K562 (cell line): ENCODE measurements at regions of chr2 and their contacts with region 1.

Region 1: DNA sequence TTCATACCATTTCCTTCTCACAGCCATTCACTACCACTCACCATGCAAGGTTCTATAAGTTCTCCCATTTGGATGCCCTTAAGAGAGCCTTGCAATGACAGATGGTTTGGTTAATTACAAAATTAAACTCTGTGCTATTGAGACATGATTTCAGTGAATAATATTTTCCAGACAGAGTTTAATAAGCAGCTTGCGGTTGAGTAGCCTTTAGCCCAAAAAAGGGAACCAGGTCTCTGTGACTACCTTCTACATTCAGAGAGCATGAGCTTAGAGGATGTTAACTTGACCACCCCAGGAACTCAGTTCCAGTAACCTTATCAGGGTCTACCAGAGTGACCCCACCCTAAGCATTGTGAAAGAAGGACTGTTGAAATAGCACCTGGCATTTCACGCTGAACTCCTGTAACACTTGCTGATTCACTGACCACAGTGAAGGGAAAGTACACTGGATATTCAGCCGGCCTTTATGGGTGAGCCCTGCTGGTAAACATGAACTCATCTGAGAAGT is 1173.1 kb upstream of the ZEB2 start:
- DNase-seq: peak; percentile 65 to 97 (median 80)
- ATAC-seq: peak; percentile 98
- H3K4me3 ChIP-seq: no peak overlapping the region
- H3K27ac ChIP-seq: peak overlapping the region; percentile 82
- H3K4me1 ChIP-seq: peaks cover 0 to 19% of the 10 kb centered on the region in 2 experiments; a peak in 3 of 5 replicates
- H3K27me3 ChIP-seq: no peaks in the 10 kb centered on the region
- CTCF ChIP-seq: no peak
- EP300 ChIP-seq: peak; percentile 99
- POLR2A ChIP-seq: 0 out of 2 replicates have a peak, but pooled peaks have one; percentile 36
- RAD21 ChIP-seq: peak; percentile 8 to 53; a peak in 3 of 4 replicates

Region 2: DNA sequence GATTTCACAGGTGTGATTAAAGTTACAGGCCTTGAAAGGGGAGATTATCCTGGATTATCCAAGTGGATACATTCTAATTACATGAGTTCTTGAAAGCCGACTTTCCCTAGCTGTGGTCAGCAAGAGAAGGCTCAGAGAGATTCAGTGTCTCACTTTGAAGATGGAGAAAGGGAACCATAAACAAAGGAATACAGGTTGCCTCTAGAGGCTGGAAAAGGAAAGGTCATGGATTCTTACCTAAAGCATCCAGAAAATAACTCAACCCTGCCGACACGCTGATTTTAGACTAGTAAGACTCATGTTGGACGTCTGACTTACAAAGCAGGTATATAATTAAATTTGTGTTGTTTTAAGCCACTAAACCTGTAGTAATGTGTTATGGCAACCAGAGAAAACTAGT is 77.4 kb before region 1 on chr2:
- CTCF ChIA-PET with region 1: no interaction called
- POLR2A ChIA-PET with region 1: no interaction called
- in situ Hi-C with region 1: no loop called
- intact Hi-C with region 1: no loop called
- DNase-seq: no peak
- ATAC-seq: no peak
- H3K4me3 ChIP-seq: no peak overlapping the region
- H3K27ac ChIP-seq: no peak overlapping the region
- H3K4me1 ChIP-seq: no peaks in the 10 kb centered on the region
- H3K27me3 ChIP-seq: no peaks in the 10 kb centered on the region
- CTCF ChIP-seq: no peak
- EP300 ChIP-seq: no peak
- POLR2A ChIP-seq: no peak
- RAD21 ChIP-seq: no peak

Region 3: GRCh38 chr2:145724311-145724898 is 31.4 kb after region 1 on chr2:
- CTCF ChIA-PET with region 1: no interaction called
- POLR2A ChIA-PET with region 1: no interaction called
- in situ Hi-C with region 1: no loop called
- intact Hi-C with region 1: loop called (anchors 1 kb)
- DNase-seq: no peak
- ATAC-seq: peak; percentile 45
- H3K4me3 ChIP-seq: no peak overlapping the region
- H3K27ac ChIP-seq: peak overlapping the region; percentile 78
- H3K4me1 ChIP-seq: peaks cover 5 to 20% of the 10 kb centered on the region in 2 experiments; a peak in 4 of 5 replicates
- H3K27me3 ChIP-seq: no peaks in the 10 kb centered on the region
- CTCF ChIP-seq: no peak
- EP300 ChIP-seq: no peak
- POLR2A ChIP-seq: no peak
- RAD21 ChIP-seq: no peak